CD4-positive, alpha-beta memory T cell (primary cell): ENCODE measurements at regions of chr20 and their contacts with region 1.

Region 1: GRCh38 chr20:38083338-38084048 is 49.9 kb downstream of the RPRD1B start:
- DNase-seq: no peak
- H3K4me3 ChIP-seq: no peak overlapping the region
- H3K4me3 Mint-ChIP-seq: no peak overlapping the region
- H3K27ac ChIP-seq: no peak overlapping the region
- H3K27ac Mint-ChIP-seq: peak overlapping the region in 2 of 7 donors; percentile 22 to 29
- H3K4me1 ChIP-seq: no peaks in the 10 kb centered on the region
- H3K4me1 Mint-ChIP-seq: peaks cover 11 to 38% (median 20%) of the 10 kb centered on the region in 4 donors
- H3K27me3 ChIP-seq: no peaks in the 10 kb centered on the region
- H3K27me3 Mint-ChIP-seq: no peaks in the 10 kb centered on the region

Region 2: DNA sequence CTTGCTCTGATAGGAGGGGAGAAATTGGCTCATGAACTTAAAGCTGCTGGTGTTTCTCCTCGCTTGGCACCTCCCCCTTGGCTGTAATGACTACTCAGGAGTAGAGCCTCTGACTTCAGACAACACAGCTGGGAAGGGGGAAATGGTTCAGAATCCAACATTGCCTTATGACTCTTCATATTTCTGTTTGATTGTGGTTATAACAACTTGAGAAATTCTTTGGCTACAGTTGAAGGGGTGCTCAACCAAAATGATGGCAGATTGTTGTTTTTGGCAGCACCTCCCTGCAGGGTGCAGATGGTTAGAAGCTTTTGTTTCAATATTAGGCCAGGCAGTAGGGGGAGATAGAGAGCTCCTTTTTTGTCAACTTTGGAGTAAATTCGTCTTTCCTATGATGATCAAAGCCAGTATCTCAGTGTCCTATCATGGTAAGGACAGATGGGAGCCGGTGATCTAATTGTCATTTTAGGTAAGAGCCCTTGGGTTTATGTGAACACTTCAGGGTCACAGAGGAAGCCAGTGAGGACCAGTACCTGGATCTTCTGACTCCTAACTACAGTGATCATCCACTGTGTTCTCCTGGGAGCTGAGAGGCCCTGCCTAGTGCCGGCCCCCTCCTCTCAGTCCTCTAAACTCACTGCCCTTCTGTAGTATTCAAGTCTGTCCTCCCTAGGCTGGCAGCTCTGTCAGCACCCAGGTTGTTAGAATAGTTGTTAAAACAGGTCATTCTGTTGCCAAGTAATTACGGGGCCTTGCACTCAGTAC is 10.0 kb before region 1 on chr20:
- CTCF ChIA-PET with region 1: interaction called, 12 read pairs
- POLR2A ChIA-PET with region 1: interaction called, 3 read pairs
- intact Hi-C with region 1: no loop called
- DNase-seq: peak; percentile 17 to 39 (median 33)
- H3K4me3 ChIP-seq: no peak overlapping the region
- H3K4me3 Mint-ChIP-seq: no peak overlapping the region
- H3K27ac ChIP-seq: no peak overlapping the region
- H3K27ac Mint-ChIP-seq: peak overlapping the region in 6 of 7 donors; percentile 7 to 64 (median 37)
- H3K4me1 ChIP-seq: no peaks in the 10 kb centered on the region
- H3K4me1 Mint-ChIP-seq: peaks cover 14 to 23% (median 20%) of the 10 kb centered on the region in 4 donors
- H3K27me3 ChIP-seq: no peaks in the 10 kb centered on the region
- H3K27me3 Mint-ChIP-seq: no peaks in the 10 kb centered on the region